ENCODE measurements at regions of chr11 and their contacts with region 1.

Region 1: DNA sequence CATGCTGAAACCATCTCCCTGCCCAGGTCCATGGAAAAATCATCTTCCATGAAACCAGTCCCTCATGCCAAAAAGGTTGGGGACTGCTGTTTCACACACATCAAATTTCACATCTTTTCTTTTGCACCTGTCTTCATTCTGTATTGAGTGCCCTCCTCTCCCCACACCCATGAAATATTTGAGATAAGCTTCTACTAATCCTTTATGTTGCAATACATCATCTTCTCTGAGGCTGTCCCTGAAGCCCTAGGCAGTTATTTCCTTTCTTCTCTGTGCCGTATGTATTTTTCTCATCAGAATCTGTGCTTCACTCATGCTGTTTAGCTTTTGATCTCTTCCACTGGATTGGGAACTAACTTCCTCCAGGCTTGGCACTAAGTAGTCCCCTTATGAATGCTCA is 40.0 kb upstream of the RRM1 start:
- DNase-seq: peak in 1 of 2 experiments; percentile 40
- H3K4me3 ChIP-seq: no peak overlapping the region
- H3K4me3 Mint-ChIP-seq: no peak overlapping the region
- H3K27ac Mint-ChIP-seq: peak overlapping the region; percentile 37
- H3K4me1 ChIP-seq: peaks cover 23% of the 10 kb centered on the region
- H3K4me1 Mint-ChIP-seq: peaks cover 29% of the 10 kb centered on the region
- H3K27me3 ChIP-seq: no peaks in the 10 kb centered on the region
- H3K27me3 Mint-ChIP-seq: no peaks in the 10 kb centered on the region
- CTCF ChIP-seq: no peak

Region 2: GRCh38 chr11:3984896-3985295 is 69.7 kb before region 1 on chr11:
- CTCF ChIA-PET with region 1: no interaction called
- POLR2A ChIA-PET with region 1: no interaction called
- intact Hi-C with region 1: no loop called
- DNase-seq: peak in 1 of 2 experiments; percentile 29
- H3K4me3 ChIP-seq: no peak overlapping the region
- H3K4me3 Mint-ChIP-seq: no peak overlapping the region
- H3K27ac Mint-ChIP-seq: no peak overlapping the region
- H3K4me1 ChIP-seq: no peaks in the 10 kb centered on the region
- H3K4me1 Mint-ChIP-seq: peaks cover 7% of the 10 kb centered on the region
- H3K27me3 ChIP-seq: no peaks in the 10 kb centered on the region
- H3K27me3 Mint-ChIP-seq: no peaks in the 10 kb centered on the region
- CTCF ChIP-seq: peak in 1 of 2 experiments; percentile 35

Region 3: DNA sequence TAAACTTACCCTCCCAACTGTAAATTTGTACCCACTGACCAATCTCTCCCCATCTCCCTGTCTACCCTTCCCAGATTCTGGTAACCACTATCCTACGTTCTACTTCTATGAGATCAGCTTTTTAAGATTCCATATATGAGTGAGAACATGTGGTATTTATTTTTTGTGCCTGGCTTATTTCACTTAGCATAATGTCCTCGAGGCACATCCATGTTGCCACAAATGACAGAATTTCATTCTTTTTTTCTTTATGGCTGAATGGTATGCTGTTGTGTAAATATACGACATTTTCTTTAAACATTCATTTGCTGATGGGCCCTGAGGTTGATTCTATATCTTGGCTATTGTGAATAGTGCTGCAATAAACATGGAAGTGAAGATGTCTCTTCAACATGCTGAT is 34.8 kb before region 1 on chr11:
- CTCF ChIA-PET with region 1: no interaction called
- POLR2A ChIA-PET with region 1: no interaction called
- intact Hi-C with region 1: loop called (anchors 2 kb)
- DNase-seq: no peak
- H3K4me3 ChIP-seq: no peak overlapping the region
- H3K4me3 Mint-ChIP-seq: peak overlapping the region; percentile 1
- H3K27ac Mint-ChIP-seq: peak overlapping the region; percentile 45
- H3K4me1 ChIP-seq: peaks cover 46% of the 10 kb centered on the region
- H3K4me1 Mint-ChIP-seq: peaks cover 40% of the 10 kb centered on the region
- H3K27me3 ChIP-seq: no peaks in the 10 kb centered on the region
- H3K27me3 Mint-ChIP-seq: no peaks in the 10 kb centered on the region
- CTCF ChIP-seq: no peak

Region 4: GRCh38 chr11:4095509-4096230 is 41.0 kb after region 1 on chr11:
- CTCF ChIA-PET with region 1: no interaction called
- POLR2A ChIA-PET with region 1: no interaction called
- intact Hi-C with region 1: no loop called
- DNase-seq: peak in 1 of 2 experiments; percentile 34
- H3K4me3 ChIP-seq: peak overlapping the region; percentile 64
- H3K4me3 Mint-ChIP-seq: peak overlapping the region; percentile 92
- H3K27ac Mint-ChIP-seq: peak overlapping the region; percentile 97
- H3K4me1 ChIP-seq: peaks cover 9% of the 10 kb centered on the region; the same call in 1 of the 2 replicates
- H3K4me1 Mint-ChIP-seq: peaks cover 8% of the 10 kb centered on the region
- H3K27me3 ChIP-seq: no peaks in the 10 kb centered on the region
- H3K27me3 Mint-ChIP-seq: no peaks in the 10 kb centered on the region
- CTCF ChIP-seq: peak in 1 of 2 experiments; percentile 19